Endothelial cell of umbilical vein (primary cell): ENCODE measurements at regions of chr14 and their contacts with region 1.

Region 1: DNA sequence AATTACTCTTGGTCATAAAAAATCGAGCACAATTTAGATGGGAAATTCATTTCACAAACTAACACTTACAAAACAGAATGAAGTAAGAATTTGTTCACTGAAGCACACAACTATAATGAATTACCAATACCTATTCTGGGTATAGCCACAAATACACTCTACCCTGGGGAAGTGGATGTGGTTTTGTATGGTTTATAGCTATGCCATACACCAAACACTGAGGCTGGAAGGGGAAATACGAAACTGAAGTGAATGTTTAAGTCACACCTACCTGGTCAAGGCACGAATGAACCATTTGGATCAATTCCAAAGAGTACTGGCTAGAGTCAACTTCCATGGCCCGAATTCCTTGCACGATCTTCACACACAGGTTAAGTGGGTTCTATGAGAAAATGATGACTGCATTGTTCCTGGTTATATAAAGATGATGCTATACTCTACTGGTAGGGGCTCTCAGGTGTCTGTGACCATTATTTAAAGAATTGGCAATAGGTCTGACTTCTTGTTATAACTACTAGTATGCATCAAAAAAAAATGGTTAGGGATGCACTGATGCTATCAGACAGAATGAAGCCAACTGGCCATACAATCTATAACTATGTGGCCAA is 12.8 kb downstream of the NEK9 start:
- DNase-seq: no peak
- H3K4me3 ChIP-seq: no peak overlapping the region
- H3K27ac ChIP-seq: no peak overlapping the region
- H3K4me1 ChIP-seq: no peaks in the 10 kb centered on the region
- H3K27me3 ChIP-seq: no peaks in the 10 kb centered on the region
- CTCF ChIP-seq: no peak
- POLR2A ChIP-seq: no peak

Region 2: GRCh38 chr14:75702616-75703261 is 588.7 kb after region 1 on chr14:
- CTCF ChIA-PET with region 1: no interaction called
- POLR2A ChIA-PET with region 1: no interaction called
- dilution Hi-C with region 1: no loop called
- intact Hi-C with region 1: loop called (anchors 5 kb)
- DNase-seq: no peak
- H3K4me3 ChIP-seq: no peak overlapping the region
- H3K27ac ChIP-seq: no peak overlapping the region
- H3K4me1 ChIP-seq: no peaks in the 10 kb centered on the region
- H3K27me3 ChIP-seq: no peaks in the 10 kb centered on the region
- CTCF ChIP-seq: no peak
- POLR2A ChIP-seq: no peak